OCI-LY7 (cell line): ENCODE measurements at regions of chr11 and their contacts with region 1.

Region 1: DNA sequence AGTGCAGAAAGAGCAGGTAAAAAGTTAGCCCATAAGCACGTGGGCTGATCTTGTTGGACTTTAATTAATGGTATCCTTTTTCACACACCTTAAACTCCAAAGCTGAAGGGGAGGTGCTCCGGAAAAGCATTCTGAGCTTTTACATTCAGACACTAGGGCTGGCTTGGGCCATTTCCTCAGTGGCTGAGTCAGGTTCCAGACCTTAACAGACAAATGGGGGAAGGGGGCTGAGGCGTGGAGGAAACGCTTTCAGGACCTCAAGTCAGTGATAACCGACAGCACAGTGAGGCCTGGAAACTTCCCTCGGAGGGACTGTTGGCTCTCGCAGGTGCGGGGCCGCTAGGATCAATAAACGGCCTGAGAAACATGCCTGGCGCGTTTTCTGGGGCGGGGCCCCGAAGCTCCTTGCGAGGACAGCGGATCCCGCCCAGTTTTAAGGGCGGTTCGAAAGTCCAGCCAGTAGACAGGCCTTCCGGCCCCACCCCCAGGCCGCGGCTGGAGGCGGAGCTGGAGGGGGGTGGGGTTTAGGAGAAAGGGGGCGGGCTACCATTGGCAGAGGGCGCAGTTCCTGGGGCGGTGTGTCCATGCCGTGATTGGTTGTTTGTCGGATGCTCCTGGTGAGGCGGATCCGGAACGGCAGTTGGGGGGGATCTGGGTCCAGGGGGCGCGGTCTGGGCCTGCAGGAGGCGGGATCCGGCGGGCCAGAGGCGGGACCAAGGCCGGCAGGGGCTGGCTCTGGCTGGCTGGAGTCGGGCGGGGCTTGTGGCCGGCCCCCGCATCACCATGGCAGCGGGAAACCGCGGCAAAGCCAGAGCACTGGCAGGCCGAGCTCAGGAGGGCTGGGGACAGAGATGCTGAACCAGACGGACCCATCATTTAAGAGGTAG is 8.0 kb downstream of the C11orf52 start:
- DNase-seq: peak; percentile 97
- H3K4me3 ChIP-seq: peak overlapping the region; percentile 67
- H3K27ac ChIP-seq: peak overlapping the region; percentile 79
- H3K4me1 ChIP-seq: peaks cover 14% of the 10 kb centered on the region
- CTCF ChIP-seq: 0 out of 2 replicates have a peak, but pooled peaks have one; percentile 13

Region 2: GRCh38 chr11:111870886-111871692 is 55.7 kb before region 1 on chr11 and contains the start of gene ALG9:
- CTCF ChIA-PET with region 1: no interaction called
- POLR2A ChIA-PET with region 1: interaction called, 14 read pairs
- intact Hi-C with region 1: no loop called
- DNase-seq: peak; percentile 79
- H3K4me3 ChIP-seq: peak within 1 kb of the TSS; percentile 79
- H3K27ac ChIP-seq: peak within 1 kb of the TSS; percentile 12
- H3K4me1 ChIP-seq: peaks cover 16% of the 10 kb centered on the region
- CTCF ChIP-seq: peak; percentile 43; the same call in 1 of the 2 replicates
- total RNA-seq, gene ALG9: 13.8 and 16.8 TPM in 2 replicates

Region 3: DNA sequence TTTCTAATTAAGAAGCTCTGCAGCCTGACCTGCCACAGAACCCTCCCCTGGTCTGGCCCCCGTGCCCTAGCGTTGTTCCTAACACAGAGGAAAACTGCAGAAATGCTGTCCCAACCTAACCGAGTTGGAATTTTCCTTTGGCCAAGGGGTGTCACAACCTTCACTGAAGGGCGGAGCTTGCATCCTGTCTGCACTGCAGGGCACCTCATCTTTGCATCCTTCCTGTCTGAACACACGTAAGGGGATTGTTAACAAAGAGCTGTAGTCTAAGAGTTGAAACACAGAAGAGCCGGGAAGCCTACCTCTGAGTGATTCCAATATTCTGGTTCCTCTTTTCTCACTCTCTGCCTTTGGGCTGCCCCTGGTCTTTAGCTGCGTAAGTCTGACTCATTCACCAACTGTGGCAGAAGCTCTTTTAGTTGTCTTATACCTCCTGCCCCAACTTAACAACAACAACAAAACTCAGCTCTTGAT is 12.0 kb after region 1 on chr11:
- CTCF ChIA-PET with region 1: interaction called, 12 read pairs
- POLR2A ChIA-PET with region 1: interaction called, 54 read pairs
- intact Hi-C with region 1: no loop called
- DNase-seq: peak; percentile 67
- H3K4me3 ChIP-seq: peak overlapping the region; percentile 70
- H3K27ac ChIP-seq: peak overlapping the region; percentile 39
- H3K4me1 ChIP-seq: peaks cover 42% of the 10 kb centered on the region
- CTCF ChIP-seq: no peak

Region 4: DNA sequence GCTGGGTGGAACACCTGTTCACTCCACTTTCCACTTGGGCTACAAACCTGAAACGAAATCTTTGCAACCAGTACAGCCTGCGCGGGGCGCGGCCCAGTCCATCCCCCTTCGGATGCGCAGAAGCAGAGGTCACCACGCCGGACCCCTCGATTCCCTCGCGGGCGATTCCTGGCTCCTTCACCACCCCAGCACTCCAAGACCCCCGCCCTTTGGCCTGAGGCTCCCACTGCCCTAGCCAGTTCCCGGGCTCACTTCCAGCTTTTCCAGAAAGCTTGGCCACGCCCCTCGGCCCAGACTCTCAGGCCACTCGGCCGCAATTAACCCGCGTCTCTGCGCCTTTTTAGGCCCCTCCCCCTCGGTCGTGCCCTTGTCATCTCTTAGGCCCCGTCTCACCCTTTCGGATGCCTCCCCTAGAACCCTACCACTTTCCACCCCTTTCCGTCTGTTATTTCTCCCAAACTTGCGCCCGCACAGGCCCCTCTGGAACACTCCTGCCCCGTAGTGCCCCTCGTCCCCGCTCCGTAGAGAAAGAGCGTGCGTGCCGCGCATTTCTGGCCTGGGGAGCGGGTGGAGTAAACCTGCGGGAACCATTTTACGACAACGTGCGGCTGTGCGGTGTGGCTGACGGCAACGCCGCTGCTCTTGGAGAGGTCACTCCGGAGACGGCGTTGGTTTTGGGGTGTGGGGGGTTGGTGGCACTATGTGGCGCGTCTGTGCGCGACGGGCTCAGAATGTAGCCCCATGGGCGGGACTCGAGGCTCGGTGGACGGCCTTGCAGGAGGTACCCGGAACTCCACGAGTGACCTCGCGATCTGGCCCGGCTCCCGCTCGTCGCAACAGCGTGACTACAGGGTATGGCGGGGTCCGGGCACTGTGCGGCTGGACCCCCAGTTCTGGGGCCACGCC is 98.3 kb after region 1 on chr11 and contains the start of gene DLAT:
- CTCF ChIA-PET with region 1: no interaction called
- POLR2A ChIA-PET with region 1: interaction called, 4 read pairs
- intact Hi-C with region 1: loop called (anchors 2 kb)
- DNase-seq: peak; percentile 88
- H3K4me3 ChIP-seq: peak within 1 kb of the TSS; percentile 87
- H3K27ac ChIP-seq: peak within 1 kb of the TSS; percentile 82
- H3K4me1 ChIP-seq: peaks cover 23% of the 10 kb centered on the region
- CTCF ChIP-seq: no peak
- total RNA-seq, gene DLAT: 34.5 and 42.0 TPM in 2 replicates

Region 5: DNA sequence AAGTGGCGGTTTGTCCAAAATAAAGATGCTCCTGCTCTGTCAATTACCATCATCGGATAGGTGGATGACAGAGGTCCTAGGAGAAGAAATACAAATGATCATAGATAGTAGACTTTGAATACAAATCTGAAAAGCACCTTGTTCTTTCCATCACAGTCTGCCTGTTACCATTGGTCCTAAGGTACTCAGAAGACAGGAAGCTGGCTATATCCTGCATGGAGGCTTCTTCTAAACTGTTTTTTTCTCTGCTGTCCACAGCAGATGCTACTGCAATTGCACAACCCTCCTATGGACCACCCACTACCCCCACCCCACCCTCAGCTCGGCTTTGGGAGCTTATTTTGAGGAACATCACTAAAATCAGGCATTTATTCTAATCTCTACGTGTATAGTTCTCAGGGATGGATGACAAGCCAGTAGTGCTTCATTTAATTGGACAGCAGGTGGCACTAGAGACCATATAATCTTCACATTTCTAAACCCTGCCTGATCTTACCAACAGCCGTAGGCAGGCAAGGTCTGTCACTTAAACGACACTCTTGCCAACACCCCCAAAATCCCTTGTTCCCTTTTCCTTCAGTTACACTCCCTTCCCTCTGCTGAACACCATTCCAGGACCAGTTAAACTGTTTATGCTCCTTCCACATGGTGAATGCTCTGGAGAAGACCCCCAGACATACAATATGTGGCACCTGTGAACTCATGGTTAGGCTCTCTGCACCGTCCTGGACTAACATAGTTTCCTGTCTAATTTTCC is 292.9 kb after region 1 on chr11:
- CTCF ChIA-PET with region 1: no interaction called
- POLR2A ChIA-PET with region 1: no interaction called
- intact Hi-C with region 1: loop called (anchors 5 kb)
- DNase-seq: peak; percentile 79
- H3K4me3 ChIP-seq: no peak overlapping the region
- H3K27ac ChIP-seq: no peak overlapping the region
- H3K4me1 ChIP-seq: no peaks in the 10 kb centered on the region
- CTCF ChIP-seq: peak; percentile 88

Region 6: DNA sequence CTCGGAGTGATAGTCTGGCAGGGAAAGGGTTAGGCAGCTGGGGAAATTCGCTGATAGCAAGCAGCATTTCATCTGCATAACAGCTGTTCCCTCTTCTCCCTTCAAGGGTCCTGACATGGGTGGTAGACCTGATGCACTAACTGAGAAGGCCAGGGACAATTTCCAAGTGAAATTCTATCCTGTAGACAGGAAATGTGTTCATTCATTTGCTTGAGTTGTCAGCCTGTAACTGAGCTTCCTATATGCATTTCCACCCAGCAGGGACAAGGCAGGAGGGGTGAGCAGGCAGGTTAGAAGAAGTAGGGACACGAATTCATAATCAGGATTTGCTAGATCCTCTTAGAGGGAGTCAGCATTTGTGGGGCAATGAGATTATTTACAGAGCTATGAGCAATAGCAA is 880.1 kb after region 1 on chr11:
- CTCF ChIA-PET with region 1: no interaction called
- POLR2A ChIA-PET with region 1: no interaction called
- intact Hi-C with region 1: no loop called
- DNase-seq: no peak
- H3K4me3 ChIP-seq: no peak overlapping the region
- H3K27ac ChIP-seq: no peak overlapping the region
- H3K4me1 ChIP-seq: no peaks in the 10 kb centered on the region
- CTCF ChIP-seq: no peak